Posterior vena cava (tissue), 2 donors: ENCODE measurements at regions of chr21 and their contacts with region 1.

Region 1: GRCh38 chr21:39527664-39528381 is 76.1 kb downstream of the SH3BGR start:
- DNase-seq: no peak

Region 2: DNA sequence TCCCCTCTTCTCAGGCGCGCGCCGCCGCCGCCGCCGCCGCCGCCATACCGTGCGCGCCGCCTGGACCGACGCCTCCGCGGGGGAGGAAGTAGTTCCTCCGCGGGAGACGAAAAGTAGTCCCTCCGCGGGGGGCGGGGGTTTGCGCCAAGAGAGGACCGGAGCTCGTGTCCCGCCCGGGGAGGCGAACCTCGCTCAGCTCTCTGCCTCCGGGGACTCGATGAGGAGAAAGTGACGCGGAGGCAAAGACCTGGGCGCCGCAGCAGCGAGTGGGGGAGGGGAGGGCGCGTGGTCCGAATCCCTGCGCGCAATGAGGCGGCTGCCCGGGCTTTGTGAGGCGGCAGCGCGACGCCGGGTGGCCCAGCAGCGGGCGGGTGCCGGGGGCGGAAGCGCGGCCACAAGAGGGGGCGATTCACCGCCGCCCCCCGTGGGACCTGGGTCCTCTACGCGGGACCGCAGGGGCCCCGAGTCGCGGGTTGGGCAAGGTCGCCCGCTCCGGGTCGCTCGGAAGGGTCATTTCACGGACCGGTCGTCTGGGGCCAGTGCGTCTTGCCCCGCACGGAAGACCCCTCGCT is 214.2 kb before region 1 on chr21 and contains the start of gene BRWD1:
- intact Hi-C with region 1: no loop called
- DNase-seq: peak; percentile 94
- total RNA-seq, gene BRWD1: 35.5 to 37.3 TPM

Region 3: DNA sequence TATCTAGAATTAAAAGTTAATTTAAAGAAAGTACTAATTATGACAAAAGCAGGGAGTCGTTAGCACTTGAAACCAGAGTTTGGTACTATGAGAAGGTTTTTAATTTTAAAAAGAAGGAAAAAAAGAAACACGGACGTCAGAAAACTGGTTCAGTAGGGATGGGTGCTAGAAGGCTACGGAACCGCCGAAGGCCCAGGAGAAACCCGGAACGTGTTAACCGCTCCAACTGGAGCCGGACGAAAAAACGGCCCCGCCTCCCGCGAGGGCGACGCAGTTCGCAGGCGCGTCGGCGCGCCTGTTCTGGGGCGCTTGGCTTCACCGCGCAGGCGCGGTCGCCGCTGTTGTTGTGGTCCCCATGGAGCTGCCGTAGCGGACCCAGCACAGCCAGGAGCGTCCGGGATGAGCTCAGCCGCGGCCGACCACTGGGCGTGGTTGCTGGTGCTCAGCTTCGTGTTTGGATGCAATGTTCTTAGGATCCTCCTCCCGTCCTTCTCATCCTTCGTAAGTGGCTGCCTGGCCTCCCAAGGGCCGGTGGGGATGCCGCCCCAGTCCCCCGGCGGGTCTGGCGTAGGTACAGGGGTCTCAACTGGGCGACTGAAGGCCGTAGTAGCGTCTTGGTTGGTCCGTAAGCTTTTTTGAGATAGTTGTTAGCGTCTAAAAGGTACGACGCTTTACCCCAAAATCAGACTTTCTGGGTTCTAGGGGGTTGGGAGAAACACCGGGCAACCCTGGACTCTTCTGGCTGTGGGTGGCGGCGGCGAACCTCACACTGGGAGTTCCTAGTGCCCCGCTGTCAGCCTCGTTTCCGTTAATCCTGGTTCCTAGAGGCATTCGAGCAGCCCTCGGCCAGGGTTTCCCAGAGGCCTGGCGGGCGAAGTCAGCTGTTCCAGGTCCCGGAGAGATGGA is 147.6 kb before region 1 on chr21:
- intact Hi-C with region 1: no loop called
- DNase-seq: peak; percentile 99

Region 4: DNA sequence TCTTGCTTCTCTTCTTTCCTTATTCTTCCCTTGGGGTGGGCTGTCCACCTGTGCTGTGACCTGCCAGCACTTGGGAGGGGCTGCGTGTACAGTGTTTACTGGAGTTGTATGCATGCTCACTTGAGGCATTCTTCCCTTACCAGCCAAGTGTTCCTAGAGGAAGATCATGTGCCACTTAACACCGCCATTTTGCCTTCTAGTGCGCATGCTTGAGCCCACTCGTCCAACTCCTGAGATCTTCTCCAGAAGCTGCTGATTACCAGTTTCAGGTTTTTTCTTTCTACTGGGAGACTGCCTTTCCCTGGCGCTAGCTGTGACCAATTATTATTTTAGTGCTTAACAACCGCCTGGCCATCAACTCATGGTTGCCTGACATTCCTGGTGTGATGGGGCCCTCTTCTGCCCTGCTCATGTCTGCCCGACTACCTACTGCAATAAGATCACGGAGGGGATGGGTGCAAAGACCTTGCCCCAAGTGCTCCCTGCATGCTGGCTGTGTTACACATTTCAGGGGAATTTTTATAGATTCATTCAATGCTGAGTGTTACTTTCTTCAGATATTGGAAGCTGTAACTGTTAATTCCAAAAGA is 10.7 kb after region 1 on chr21:
- intact Hi-C with region 1: no loop called
- DNase-seq: no peak

Region 5: DNA sequence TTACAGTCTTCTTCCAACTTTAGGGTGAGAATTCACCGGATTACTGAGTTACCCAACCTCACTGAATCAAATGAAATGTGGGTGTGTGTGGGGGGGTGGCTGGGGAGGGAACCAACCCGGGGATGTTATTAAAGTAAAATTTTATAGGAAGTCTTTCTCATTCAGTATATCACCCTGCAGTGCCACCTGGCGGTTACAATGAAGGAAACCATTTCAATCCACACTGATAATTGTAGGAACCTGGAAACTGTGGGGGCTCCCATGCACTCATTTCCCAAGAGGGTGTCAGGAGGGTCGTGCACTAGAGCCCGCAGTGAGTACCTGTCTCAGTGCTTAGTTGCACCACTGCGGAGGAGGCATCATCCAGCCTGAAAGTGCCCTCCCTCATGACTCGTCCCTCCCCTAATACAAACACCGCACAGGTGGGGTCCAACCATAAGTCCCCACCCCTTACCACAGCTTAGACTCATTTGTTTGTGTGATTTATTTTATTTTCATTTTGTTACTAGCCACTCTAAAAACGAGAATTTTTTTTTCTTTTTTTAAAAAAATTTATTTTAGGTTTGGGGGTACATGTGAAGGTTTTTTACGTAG is 188.1 kb after region 1 on chr21:
- intact Hi-C with region 1: loop called (anchors 5 kb)
- DNase-seq: no peak

Region 6: GRCh38 chr21:39796466-39796865 is 268.6 kb after region 1 on chr21:
- intact Hi-C with region 1: no loop called
- DNase-seq: no peak